Activated CD4-positive, alpha-beta memory T cell treated with anti-CD3 and anti-CD28 coated beads for 36 hours (primary cell): ENCODE measurements at regions of chr13 and their contacts with region 1.

Region 1: DNA sequence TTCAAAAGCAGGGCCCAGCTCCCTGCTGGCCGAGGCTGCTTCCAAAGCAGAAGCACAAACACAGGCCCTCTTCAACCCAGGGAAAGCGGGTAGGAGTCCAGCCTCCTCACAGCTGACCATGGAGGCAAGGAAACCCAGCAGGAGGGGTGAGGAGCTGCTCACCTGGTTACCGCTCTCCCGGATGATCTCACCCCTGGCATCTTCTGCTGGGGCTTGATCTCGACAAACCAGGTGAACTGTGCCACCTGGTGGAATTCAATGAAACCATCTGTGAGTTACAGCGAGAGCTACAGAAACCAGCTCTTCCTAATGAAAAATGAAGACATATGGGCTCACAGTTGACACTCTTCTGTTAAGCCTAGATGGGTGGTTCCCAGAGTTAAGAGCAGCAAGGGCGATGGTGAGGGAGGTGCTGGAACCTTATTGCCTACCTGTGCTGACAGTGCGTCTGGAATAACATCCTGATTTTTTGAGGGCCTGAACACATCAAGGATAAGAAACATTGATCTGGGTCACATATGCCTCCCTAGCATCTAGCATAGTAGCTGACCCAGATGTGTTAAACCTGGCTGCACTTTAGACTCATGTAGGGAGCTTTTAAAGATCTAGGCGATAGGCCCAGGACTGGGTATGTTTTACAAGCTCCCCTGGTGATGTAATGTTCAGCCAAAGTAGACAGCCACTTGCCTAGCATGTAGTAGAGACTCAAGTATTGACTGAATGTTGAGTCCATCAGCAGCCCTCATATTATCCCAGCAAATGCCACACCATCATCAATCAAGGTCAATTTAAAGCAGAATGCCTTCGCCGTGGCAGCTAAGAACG is 6.1 kb downstream of the DHRS12 start:
- DNase-seq: peak; percentile 76
- H3K4me3 Mint-ChIP-seq: no peak overlapping the region
- H3K27ac Mint-ChIP-seq: no peak overlapping the region
- H3K4me1 Mint-ChIP-seq: peaks cover 43% of the 10 kb centered on the region
- H3K27me3 Mint-ChIP-seq: no peaks in the 10 kb centered on the region

Region 2: DNA sequence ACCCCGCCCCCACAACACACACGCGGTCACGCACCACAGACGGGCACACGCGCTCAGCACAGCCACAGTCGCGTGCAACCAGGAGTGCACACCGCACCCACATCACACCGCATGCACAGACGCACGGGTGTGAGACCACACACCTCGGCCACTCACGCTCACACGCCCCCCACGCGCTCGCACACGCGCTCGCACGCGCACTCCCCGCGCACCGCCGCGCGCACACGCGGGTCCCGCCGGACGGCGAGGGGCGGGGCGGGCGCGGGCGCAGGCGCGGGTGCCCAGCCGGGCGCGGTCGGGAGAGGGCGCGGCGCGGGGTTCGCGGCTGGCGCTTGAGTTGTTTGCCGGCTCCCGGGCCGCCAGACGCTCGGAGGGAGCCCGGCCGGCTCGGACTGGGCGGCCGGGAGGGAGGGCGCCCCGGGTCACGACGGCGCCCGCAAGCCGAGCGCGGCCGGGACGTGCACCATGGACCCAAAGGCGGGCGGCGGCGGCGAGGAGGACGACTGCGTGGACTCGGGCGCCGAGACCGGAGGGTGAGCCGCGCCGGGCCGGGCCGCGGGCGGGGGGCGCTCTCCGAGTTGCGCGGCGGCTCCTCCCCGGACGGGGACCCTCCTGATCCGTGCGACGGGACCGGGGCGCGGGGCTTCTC is 575.7 kb before region 1 on chr13 and contains the start of gene FAM124A:
- CTCF ChIA-PET with region 1: interaction called, 4 read pairs
- POLR2A ChIA-PET with region 1: no interaction called
- intact Hi-C with region 1: loop called (anchors 10 kb)
- DNase-seq: peak; percentile 60
- H3K4me3 Mint-ChIP-seq: peak within 1 kb of the TSS; percentile 70
- H3K27ac Mint-ChIP-seq: no peak within 1 kb of the TSS
- H3K4me1 Mint-ChIP-seq: peaks cover 2% of the 10 kb centered on the region
- H3K27me3 Mint-ChIP-seq: peaks cover 53% of the 10 kb centered on the region
- total RNA-seq, gene FAM124A: 0.15 to 0.24 TPM

Region 3: DNA sequence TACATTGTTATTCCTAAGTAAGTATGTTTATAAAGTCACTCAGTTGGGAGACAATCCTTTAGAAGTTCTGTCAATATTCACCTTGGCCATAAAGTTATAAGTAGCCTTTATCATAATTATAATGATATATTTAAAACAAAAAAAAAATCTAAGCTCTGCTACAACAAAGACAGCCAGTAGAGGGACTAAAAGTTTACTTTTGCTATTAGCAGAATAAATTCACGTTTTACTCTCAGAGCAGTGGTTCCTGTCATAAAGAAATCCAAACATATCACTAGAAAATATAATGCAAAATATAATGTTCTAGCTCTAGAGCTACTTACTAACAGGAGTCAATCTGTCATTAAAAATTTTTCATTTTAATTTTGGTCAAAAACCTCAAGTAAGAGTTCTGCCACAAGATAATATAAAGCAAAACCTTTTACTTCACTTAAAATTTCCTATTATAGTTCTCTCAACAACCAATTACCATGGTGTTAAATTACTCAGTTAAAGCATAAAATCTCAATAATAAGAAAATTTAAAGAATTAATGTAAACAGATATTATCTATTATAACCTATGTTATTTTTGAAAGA is 362.8 kb before region 1 on chr13:
- CTCF ChIA-PET with region 1: interaction called, 75 read pairs
- POLR2A ChIA-PET with region 1: no interaction called
- intact Hi-C with region 1: no loop called
- DNase-seq: no peak
- H3K4me3 Mint-ChIP-seq: no peak overlapping the region
- H3K27ac Mint-ChIP-seq: no peak overlapping the region
- H3K4me1 Mint-ChIP-seq: peaks cover 22% of the 10 kb centered on the region
- H3K27me3 Mint-ChIP-seq: no peaks in the 10 kb centered on the region

Region 4: GRCh38 chr13:51583875-51584730 is 213.8 kb before region 1 on chr13 and contains the start of gene WDFY2:
- CTCF ChIA-PET with region 1: interaction called, 33 read pairs
- POLR2A ChIA-PET with region 1: interaction called, 4 read pairs
- intact Hi-C with region 1: loop called (anchors 1 kb)
- DNase-seq: peak; percentile 99
- H3K4me3 Mint-ChIP-seq: peak within 1 kb of the TSS; percentile 87
- H3K27ac Mint-ChIP-seq: peak within 1 kb of the TSS; percentile 94
- H3K4me1 Mint-ChIP-seq: peaks cover 35% of the 10 kb centered on the region
- H3K27me3 Mint-ChIP-seq: no peaks in the 10 kb centered on the region
- total RNA-seq, gene WDFY2: 9.3 to 11.2 TPM

Region 5: GRCh38 chr13:51704399-51705313 is 93.2 kb before region 1 on chr13:
- CTCF ChIA-PET with region 1: no interaction called
- POLR2A ChIA-PET with region 1: no interaction called
- intact Hi-C with region 1: no loop called
- DNase-seq: no peak
- H3K4me3 Mint-ChIP-seq: no peak overlapping the region
- H3K27ac Mint-ChIP-seq: no peak overlapping the region
- H3K4me1 Mint-ChIP-seq: no peaks in the 10 kb centered on the region
- H3K27me3 Mint-ChIP-seq: no peaks in the 10 kb centered on the region

Region 6: DNA sequence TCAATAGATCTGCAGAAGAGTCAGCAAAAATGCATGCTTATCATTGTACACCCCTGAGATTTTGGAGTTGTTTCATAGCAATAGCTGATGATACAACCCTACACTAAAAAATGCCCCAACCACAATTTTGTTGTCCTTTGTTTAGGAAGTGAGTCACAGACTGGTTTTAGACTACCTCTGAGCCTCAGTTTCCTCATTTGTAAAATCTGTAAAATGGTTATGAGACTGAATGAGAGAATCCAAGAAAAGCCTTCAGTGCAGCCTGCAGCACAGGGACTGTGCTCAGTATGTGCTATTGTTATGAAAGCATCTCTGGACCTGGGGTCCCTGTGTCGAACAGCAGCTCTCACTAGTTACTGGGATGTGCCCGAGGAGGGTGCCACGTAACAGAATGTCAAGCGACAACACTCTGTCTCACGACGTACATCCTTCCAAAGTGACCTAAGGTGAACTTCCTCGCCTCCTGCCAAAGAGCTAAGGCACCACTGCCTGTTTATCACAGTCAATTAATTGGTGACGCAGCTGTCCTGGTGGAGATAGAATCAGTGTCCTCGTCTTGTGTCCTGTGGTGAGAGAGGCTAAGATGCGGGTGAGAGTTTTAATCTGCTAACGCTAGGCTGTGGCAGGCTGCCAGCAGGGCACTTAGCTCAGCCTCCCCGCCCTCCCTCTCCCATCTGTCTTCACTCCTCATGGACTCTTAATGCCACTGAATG is 12.0 kb before region 1 on chr13:
- CTCF ChIA-PET with region 1: interaction called, 12 read pairs
- POLR2A ChIA-PET with region 1: no interaction called
- intact Hi-C with region 1: no loop called
- DNase-seq: no peak
- H3K4me3 Mint-ChIP-seq: no peak overlapping the region
- H3K27ac Mint-ChIP-seq: no peak overlapping the region
- H3K4me1 Mint-ChIP-seq: peaks cover 10% of the 10 kb centered on the region
- H3K27me3 Mint-ChIP-seq: no peaks in the 10 kb centered on the region

Region 7: DNA sequence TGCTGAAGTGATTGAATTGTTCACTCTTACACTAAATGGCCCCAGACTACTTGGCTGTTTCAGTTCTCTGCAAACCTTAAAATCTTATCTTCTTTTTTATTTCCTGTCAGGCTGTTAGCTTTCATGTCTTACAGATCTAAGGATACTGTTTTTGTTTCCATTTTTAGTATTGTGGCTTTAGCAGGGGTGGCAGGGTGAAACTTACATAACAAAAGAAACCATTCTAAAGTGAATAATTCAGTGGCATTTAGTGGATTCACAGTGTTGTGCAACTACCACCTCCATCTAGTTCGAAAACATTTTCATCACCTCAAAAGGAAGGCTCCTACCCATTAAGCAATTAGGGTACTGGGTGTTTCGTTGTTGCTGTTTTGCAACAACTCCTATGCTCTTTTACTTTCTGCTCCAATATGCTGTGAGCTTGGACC is 27.3 kb after region 1 on chr13:
- CTCF ChIA-PET with region 1: interaction called, 11 read pairs
- POLR2A ChIA-PET with region 1: interaction called, 4 read pairs
- intact Hi-C with region 1: loop called (anchors 1 kb)
- DNase-seq: no peak
- H3K4me3 Mint-ChIP-seq: peak overlapping the region; percentile 52
- H3K27ac Mint-ChIP-seq: peak overlapping the region; percentile 84
- H3K4me1 Mint-ChIP-seq: peaks cover 81% of the 10 kb centered on the region
- H3K27me3 Mint-ChIP-seq: no peaks in the 10 kb centered on the region

Region 8: DNA sequence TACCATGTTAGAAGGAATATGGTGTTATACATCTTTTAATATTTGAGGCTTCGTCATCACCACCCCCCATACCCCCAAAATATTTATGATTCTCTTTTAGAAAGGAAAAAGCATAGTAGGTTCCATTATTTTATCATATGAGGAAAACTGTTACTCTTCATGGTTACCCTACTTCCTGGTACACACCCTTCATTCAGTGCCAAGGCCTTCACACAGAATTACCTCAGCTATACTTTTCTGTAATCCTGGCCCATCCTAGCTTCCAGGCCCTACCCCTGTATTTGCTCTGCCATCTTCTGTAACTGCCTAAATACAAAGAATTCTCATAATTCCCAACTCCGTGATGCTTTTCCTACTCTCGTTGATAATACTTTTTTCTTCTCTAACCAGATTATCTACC is 222.3 kb after region 1 on chr13:
- CTCF ChIA-PET with region 1: no interaction called
- POLR2A ChIA-PET with region 1: no interaction called
- intact Hi-C with region 1: no loop called
- DNase-seq: no peak
- H3K4me3 Mint-ChIP-seq: no peak overlapping the region
- H3K27ac Mint-ChIP-seq: no peak overlapping the region
- H3K4me1 Mint-ChIP-seq: peaks cover 2% of the 10 kb centered on the region
- H3K27me3 Mint-ChIP-seq: no peaks in the 10 kb centered on the region